Pancreas (tissue), 10 donors: ENCODE measurements at regions of chr5 and their contacts with region 1.

Region 1: GRCh38 chr5:147949711-147950573 is 43.6 kb upstream of the C5orf46 start:
- DNase-seq: no peak
- ATAC-seq: peak; percentile 68 to 88 (median 86)
- H3K4me3 ChIP-seq: no peak overlapping the region
- H3K27ac ChIP-seq: no peak overlapping the region
- H3K4me1 ChIP-seq: no peaks in the 10 kb centered on the region
- H3K27me3 ChIP-seq: no peaks in the 10 kb centered on the region
- CTCF ChIP-seq: peak; percentile 36 to 61 (median 58)

Region 2: DNA sequence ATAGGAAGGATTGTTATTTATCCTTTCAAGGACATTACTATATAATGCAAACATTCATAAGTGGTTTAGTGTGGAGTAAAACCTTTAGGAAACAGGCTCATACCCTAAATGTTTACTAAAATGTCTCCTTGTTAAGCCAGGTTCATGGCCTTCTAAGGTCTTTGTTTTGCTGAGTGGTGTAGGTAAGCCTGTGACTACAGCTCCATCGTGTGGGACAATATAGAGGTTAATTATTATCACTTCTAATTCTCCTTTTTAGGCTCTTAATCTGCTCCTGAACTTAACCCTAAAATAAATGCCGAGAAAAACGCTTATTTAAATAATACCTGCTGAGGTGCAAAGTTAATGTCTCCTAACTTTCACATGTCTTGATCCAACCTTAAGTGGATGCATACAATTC is 157.7 kb after region 1 on chr5:
- intact Hi-C with region 1: loop called in 2 of 3 experiments (anchors 10 kb)
- DNase-seq: no peak
- ATAC-seq: peak in 1 of 4 donors; percentile 45
- H3K4me3 ChIP-seq: no peak overlapping the region
- H3K27ac ChIP-seq: no peak overlapping the region
- H3K4me1 ChIP-seq: no peaks in the 10 kb centered on the region
- H3K27me3 ChIP-seq: no peaks in the 10 kb centered on the region
- CTCF ChIP-seq: no peak

Region 3: DNA sequence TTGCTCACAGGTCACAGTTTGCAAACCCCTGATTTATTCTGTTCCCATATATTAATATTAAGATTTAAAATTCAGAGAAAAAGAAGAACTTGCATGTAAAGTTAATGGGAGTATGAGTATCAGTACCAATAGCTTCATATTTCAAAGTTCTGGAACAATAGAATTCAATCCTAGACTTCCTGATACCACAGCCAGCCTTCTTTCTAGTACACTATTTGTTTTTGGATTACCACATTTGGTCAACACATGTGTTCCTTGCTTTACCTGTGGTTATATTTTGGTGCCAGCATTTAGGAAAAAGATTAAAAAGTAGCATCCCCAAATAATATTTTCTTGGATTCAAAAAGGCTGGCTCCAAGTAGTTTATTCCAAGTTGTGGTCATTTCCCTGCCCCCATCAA is 163.3 kb after region 1 on chr5:
- intact Hi-C with region 1: loop called in 2 of 3 experiments (anchors 10 kb)
- DNase-seq: no peak
- ATAC-seq: no peak
- H3K4me3 ChIP-seq: no peak overlapping the region
- H3K27ac ChIP-seq: no peak overlapping the region
- H3K4me1 ChIP-seq: no peaks in the 10 kb centered on the region
- H3K27me3 ChIP-seq: no peaks in the 10 kb centered on the region
- CTCF ChIP-seq: no peak